Vagina (tissue), 2 donors: ENCODE measurements at regions of chr5 and their contacts with region 1.

Region 1: DNA sequence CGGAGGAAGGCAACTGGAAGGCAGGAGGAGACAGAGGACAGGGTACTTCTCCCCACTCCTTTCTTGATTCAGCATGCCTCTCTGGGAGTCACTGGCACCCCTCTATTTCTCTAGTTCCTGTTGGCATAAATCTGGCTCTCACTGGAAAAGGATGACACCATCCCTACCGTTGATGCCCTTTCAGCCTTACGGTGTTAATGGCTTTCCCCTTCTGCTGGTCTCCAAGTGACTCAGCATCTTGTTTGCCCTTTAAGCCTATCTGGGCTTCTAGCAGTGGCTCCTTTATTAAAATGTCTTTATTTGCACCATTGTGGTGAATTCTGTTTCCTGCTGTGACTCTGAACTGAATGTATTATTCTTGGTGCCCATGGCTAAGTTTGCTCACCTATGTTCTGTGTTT is 227.3 kb upstream of the GLRA1 start:
- DNase-seq: no peak
- H3K4me3 ChIP-seq: no peak overlapping the region
- H3K27ac ChIP-seq: no peak overlapping the region
- H3K4me1 ChIP-seq: no peaks in the 10 kb centered on the region
- H3K27me3 ChIP-seq: no peaks in the 10 kb centered on the region
- CTCF ChIP-seq: no peak
- POLR2A ChIP-seq: no peak

Region 2: GRCh38 chr5:152329207-152329606 is 177.3 kb after region 1 on chr5:
- intact Hi-C with region 1: loop called (anchors 5 kb)
- DNase-seq: no peak
- H3K4me3 ChIP-seq: no peak overlapping the region
- H3K27ac ChIP-seq: no peak overlapping the region
- H3K4me1 ChIP-seq: no peaks in the 10 kb centered on the region
- H3K27me3 ChIP-seq: no peaks in the 10 kb centered on the region
- CTCF ChIP-seq: no peak
- POLR2A ChIP-seq: no peak